ENCODE measurements at regions of chr10 and their contacts with region 1.

Region 1: GRCh38 chr10:110497438-110498086 is at the start of gene DUSP5:
- DNase-seq: peak; percentile 98
- H3K4me3 ChIP-seq: peak within 1 kb of the TSS; percentile 79 to 84
- H3K27ac ChIP-seq: peak within 1 kb of the TSS; percentile 92 to 93
- H3K4me1 ChIP-seq: peaks cover 34 to 50% of the 10 kb centered on the region in 2 experiments
- H3K27me3 ChIP-seq: no peaks in the 10 kb centered on the region
- CTCF ChIP-seq: no peak
- EP300 ChIP-seq: no peak; a peak in 1 of 4 replicates
- RAD21 ChIP-seq: no peak
- polyA plus RNA-seq, gene DUSP5: 38.2 and 52.0 TPM in 2 replicates

Region 2: GRCh38 chr10:110304780-110305421 is 192.7 kb before region 1 on chr10 and contains the start of gene SMNDC1:
- CTCF ChIA-PET with region 1: interaction called, 12 read pairs
- POLR2A ChIA-PET with region 1: no interaction called
- DNase-seq: peak; percentile 95
- H3K4me3 ChIP-seq: peak within 1 kb of the TSS; percentile 86 to 94
- H3K27ac ChIP-seq: peak within 1 kb of the TSS; percentile 93 to 95
- H3K4me1 ChIP-seq: peaks cover 13 to 18% of the 10 kb centered on the region in 2 experiments; a peak in 3 of 4 replicates
- H3K27me3 ChIP-seq: no peaks in the 10 kb centered on the region
- CTCF ChIP-seq: no peak
- EP300 ChIP-seq: no peak
- RAD21 ChIP-seq: no peak
- polyA plus RNA-seq, gene SMNDC1: 13.3 and 14.2 TPM in 2 replicates

Region 3: GRCh38 chr10:110481934-110482333 is 15.6 kb before region 1 on chr10:
- CTCF ChIA-PET with region 1: no interaction called
- POLR2A ChIA-PET with region 1: no interaction called
- DNase-seq: no peak
- H3K4me3 ChIP-seq: no peak overlapping the region
- H3K27ac ChIP-seq: no peak overlapping the region
- H3K4me1 ChIP-seq: no peaks in the 10 kb centered on the region; a peak in 1 of 4 replicates
- H3K27me3 ChIP-seq: no peaks in the 10 kb centered on the region
- CTCF ChIP-seq: no peak
- EP300 ChIP-seq: no peak
- RAD21 ChIP-seq: no peak

Region 4: GRCh38 chr10:110619514-110620397 is 122.2 kb after region 1 on chr10:
- CTCF ChIA-PET with region 1: no interaction called
- POLR2A ChIA-PET with region 1: no interaction called
- DNase-seq: no peak
- H3K4me3 ChIP-seq: no peak overlapping the region
- H3K27ac ChIP-seq: no peak overlapping the region
- H3K4me1 ChIP-seq: peaks cover 0 to 3% of the 10 kb centered on the region in 2 experiments; a peak in 2 of 4 replicates
- H3K27me3 ChIP-seq: no peaks in the 10 kb centered on the region
- CTCF ChIP-seq: no peak
- EP300 ChIP-seq: no peak
- RAD21 ChIP-seq: no peak

Measured in SK-N-SH (cell line).